IMR-90 (cell line): ENCODE measurements at regions of chr15 and their contacts with region 1.

Region 1: DNA sequence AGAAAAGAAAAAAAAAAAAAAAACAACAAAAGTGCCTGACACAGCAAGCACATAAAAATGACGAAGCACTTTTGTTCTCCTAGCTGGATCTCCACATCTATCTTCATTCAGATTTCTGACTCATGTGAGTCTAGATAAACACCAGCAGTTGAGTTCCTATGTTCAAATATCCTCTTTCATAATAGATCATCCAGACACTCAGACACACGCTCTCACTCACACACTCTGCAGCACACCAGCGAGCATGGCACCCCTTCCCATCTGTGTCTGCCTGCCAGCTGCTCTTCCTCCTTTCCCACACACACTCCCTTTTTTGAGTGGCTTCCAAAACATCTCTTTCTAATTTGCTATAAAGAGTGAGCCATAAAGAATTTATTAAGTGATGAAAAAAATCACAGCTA is 19.8 kb upstream of the CELF6 start:
- DNase-seq: peak; percentile 91
- ATAC-seq: peak; percentile 68
- H3K4me3 ChIP-seq: no peak overlapping the region
- H3K27ac ChIP-seq: no peak overlapping the region
- H3K4me1 ChIP-seq: peaks cover 6% of the 10 kb centered on the region
- H3K27me3 ChIP-seq: no peaks in the 10 kb centered on the region
- CTCF ChIP-seq: no peak
- POLR2A ChIP-seq: no peak
- RAD21 ChIP-seq: no peak

Region 2: GRCh38 chr15:72319985-72320671 is 19.6 kb before region 1 on chr15 and contains the start of gene CELF6:
- CTCF ChIA-PET with region 1: no interaction called
- POLR2A ChIA-PET with region 1: no interaction called
- dilution Hi-C with region 1: no loop called
- in situ Hi-C with region 1: no loop called
- intact Hi-C with region 1: loop called (anchors 2 kb)
- DNase-seq: peak; percentile 79
- ATAC-seq: peak; percentile 92
- H3K4me3 ChIP-seq: peak within 1 kb of the TSS; percentile 79
- H3K27ac ChIP-seq: no peak within 1 kb of the TSS
- H3K4me1 ChIP-seq: no peaks in the 10 kb centered on the region
- H3K27me3 ChIP-seq: peaks cover 21% of the 10 kb centered on the region
- CTCF ChIP-seq: no peak
- POLR2A ChIP-seq: no peak
- RAD21 ChIP-seq: no peak
- total RNA-seq, gene CELF6: not detected in 2 replicates

Region 3: GRCh38 chr15:72353265-72353664 is 13.5 kb after region 1 on chr15:
- CTCF ChIA-PET with region 1: no interaction called
- POLR2A ChIA-PET with region 1: no interaction called
- dilution Hi-C with region 1: no loop called
- in situ Hi-C with region 1: no loop called
- intact Hi-C with region 1: no loop called
- DNase-seq: peak; percentile 58
- ATAC-seq: peak; percentile 95
- H3K4me3 ChIP-seq: no peak overlapping the region
- H3K27ac ChIP-seq: no peak overlapping the region
- H3K4me1 ChIP-seq: peaks cover 10% of the 10 kb centered on the region
- H3K27me3 ChIP-seq: no peaks in the 10 kb centered on the region
- CTCF ChIP-seq: no peak
- POLR2A ChIP-seq: no peak
- RAD21 ChIP-seq: no peak